A673 (cell line): ENCODE measurements at regions of chr11 and their contacts with region 1.

Region 1: DNA sequence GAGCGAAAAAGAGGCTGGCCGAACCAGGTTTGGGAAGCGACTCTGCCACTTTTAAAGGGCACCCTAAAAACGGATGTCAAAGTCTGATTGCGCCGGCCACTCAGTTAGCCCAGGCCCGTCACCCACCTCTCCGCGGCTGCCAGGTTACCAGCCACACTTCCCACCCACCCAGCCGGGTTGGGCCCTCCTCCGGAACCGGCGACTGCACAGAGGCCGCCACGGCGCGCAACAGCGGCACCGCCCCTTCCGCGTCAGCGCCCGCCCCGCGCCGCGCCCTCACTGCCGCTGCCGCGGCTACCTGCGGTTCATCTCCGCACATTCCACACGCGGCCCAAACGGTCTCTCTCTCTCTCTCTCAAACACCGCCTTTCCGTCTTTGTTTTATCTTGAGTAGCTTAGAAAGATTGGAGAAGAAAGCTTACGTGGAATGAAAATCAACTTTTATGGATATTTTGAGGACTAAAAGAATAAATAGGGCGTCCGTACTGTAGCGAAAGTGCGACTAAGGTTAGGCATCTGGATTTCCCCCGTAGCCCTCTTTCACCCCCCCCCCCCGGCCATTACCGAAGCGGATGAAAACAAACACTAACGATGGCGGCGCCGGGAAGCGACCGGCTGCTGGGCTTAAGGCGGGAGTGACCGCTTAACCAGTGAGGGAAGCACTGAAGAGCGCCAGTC is at the starts of genes ATG13 and HARBI1:
- DNase-seq: peak; percentile 98
- H3K4me3 ChIP-seq: peak within 1 kb of the TSS; percentile 65
- H3K27ac ChIP-seq: peak within 1 kb of the TSS; percentile 97
- H3K4me1 ChIP-seq: peaks cover 23% of the 10 kb centered on the region
- H3K27me3 ChIP-seq: no peaks in the 10 kb centered on the region
- CTCF ChIP-seq: no peak
- total RNA-seq, gene ATG13: 155 and 158 TPM in 2 replicates
- total RNA-seq, gene HARBI1: 10.1 and 11.6 TPM in 2 replicates

Region 2: DNA sequence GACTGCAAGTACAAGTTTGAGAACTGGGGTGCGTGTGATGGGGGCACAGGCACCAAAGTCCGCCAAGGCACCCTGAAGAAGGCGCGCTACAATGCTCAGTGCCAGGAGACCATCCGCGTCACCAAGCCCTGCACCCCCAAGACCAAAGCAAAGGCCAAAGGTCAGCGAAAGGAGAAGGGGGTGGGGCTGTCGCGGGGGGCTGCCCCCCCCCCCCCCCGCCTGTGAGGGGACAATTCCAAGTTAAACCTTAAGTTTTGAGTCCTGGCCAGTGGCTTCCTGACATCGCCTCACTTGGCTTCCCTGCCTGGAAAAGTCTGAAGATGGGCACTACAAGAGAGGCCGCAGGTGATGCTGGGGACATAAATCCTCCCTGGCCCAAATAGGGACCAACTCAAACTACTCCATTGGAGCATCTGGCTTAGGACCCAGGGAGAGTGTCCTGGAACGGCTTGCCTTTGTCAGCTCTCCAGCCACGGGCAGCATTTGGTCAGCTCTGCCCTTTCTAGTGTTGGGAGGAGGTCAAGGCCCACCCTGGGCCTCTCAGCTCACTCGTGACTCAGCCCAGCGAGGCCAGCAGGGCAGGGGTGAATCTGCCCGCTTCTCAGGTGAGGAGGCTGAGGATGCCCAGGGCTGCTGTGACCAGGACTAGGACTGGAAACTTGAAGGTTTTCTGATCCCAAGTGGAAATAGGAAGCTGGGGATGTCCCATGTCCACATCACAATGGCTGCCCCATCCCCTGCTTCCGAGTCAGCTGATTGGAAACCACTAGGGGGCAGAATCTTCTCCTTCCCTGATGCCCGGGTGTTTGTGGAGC is 234.3 kb before region 1 on chr11:
- CTCF ChIA-PET with region 1: no interaction called
- POLR2A ChIA-PET with region 1: no interaction called
- intact Hi-C with region 1: no loop called
- DNase-seq: peak; percentile 88
- H3K4me3 ChIP-seq: peak overlapping the region; percentile 62
- H3K27ac ChIP-seq: peak overlapping the region; percentile 75
- H3K4me1 ChIP-seq: peaks cover 24% of the 10 kb centered on the region
- H3K27me3 ChIP-seq: peaks cover 3% of the 10 kb centered on the region
- CTCF ChIP-seq: peak; percentile 99

Region 3: GRCh38 chr11:47426061-47426956 is 809.2 kb after region 1 on chr11 and contains the start of gene PSMC3:
- CTCF ChIA-PET with region 1: no interaction called
- POLR2A ChIA-PET with region 1: interaction called, 13 read pairs
- intact Hi-C with region 1: no loop called
- DNase-seq: peak; percentile 100
- H3K4me3 ChIP-seq: peak within 1 kb of the TSS; percentile 78
- H3K27ac ChIP-seq: peak within 1 kb of the TSS; percentile 98
- H3K4me1 ChIP-seq: peaks cover 14% of the 10 kb centered on the region
- H3K27me3 ChIP-seq: no peaks in the 10 kb centered on the region
- CTCF ChIP-seq: no peak
- total RNA-seq, gene PSMC3: 665 and 701 TPM in 2 replicates